Endothelial cell of umbilical vein (primary cell): ENCODE measurements at regions of chr11 and their contacts with region 1.

Region 1: DNA sequence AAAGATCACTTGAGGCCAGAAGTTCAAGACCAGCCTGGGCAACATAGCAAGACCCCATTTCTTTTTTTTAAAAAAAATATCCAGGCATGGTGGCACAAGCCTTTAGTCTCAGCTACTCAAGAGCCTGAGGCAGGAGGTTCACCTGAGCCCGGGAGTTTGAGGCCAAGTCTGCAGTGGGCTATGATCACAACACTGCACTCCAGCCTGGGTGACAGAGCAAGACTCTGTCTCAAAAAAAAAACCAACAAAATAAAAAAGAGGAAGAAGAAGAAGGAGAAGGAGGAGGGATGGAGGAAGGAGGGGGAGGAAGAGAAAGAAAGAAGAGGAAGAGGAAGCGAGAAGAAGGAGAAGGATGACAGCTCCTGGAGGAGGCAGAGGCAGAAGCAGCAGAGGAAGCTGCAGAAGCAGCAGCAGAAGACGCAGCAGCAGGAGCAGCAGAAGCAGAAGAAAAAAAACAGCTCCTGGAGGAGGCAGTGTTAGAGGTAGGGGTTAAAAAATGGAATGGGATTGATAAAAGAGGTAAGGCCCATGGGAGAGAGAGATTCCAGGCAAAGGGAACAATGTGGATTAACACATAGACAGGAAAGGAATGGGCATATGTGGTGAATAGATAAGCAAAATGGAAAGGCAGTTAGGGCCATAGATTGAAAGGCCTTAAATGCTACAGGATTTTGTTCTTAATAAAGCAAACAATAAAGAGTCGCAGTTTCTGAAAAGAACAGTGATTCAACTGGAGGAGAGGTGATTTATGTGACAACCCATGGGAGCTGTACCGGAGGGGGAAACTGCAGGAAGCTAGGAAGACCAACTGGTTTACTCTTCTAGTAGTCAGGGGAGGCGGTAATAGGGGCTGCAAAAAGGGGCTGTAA is 10.9 kb downstream of the PRCP start:
- DNase-seq: peak; percentile 96
- H3K4me3 ChIP-seq: no peak overlapping the region
- H3K27ac ChIP-seq: peak overlapping the region; percentile 63
- H3K4me1 ChIP-seq: peaks cover 51% of the 10 kb centered on the region
- H3K27me3 ChIP-seq: no peaks in the 10 kb centered on the region
- CTCF ChIP-seq: no peak
- POLR2A ChIP-seq: peak; percentile 73

Region 2: DNA sequence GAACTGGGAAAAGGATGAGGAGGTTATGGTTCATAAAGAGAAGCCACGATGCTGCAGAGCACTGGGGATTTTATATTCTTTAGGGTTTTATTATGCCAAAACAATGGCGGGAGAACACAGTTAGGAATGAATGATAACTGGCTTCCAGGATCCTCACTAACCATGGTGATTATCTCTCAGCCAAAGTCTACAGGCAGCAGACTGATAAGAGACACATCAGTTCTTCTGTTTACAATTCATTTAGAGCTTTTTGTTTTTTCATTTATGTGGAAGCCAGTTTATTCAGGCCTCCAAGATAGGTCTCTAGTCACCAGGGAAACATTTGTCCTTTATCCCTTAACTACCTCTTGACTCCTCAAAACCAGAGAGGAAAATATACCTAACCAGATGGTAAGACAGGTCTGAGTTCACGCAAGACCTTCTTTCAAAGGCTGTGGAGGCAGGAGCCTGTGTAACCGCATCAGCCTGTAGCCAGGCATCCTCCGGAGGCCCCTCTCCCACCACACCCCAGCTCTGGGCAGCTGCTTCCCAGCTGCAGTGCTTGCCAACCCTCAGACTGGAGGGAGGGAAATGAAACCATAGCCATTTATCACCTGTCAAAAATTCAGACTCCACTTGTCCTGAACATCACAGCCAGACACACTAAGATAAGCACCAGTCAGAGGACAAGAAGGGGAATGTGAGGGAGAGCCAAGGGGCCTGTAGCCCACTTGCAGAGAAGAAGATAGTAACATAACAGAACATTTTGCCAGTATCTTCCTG is 98.5 kb before region 1 on chr11:
- CTCF ChIA-PET with region 1: no interaction called
- POLR2A ChIA-PET with region 1: no interaction called
- dilution Hi-C with region 1: no loop called
- intact Hi-C with region 1: loop called (anchors 1 kb)
- DNase-seq: peak; percentile 45
- H3K4me3 ChIP-seq: no peak overlapping the region
- H3K27ac ChIP-seq: no peak overlapping the region
- H3K4me1 ChIP-seq: peaks cover 43% of the 10 kb centered on the region
- H3K27me3 ChIP-seq: no peaks in the 10 kb centered on the region
- CTCF ChIP-seq: no peak
- POLR2A ChIP-seq: no peak